Heart left ventricle (tissue), 16 donors: ENCODE measurements at regions of chr17 and their contacts with region 1.

Region 1: GRCh38 chr17:39730095-39730921 is at the start of gene MIEN1:
- DNase-seq: peak; percentile 90 to 98 (median 94)
- ATAC-seq: peak; percentile 87 to 97 (median 96)
- H3K4me3 ChIP-seq: peak within 1 kb of the TSS; percentile 56 to 99 (median 81)
- H3K27ac ChIP-seq: peak within 1 kb of the TSS; percentile 48 to 97 (median 90)
- H3K4me1 ChIP-seq: peaks cover 0 to 19% (median 8%) of the 10 kb centered on the region in 12 donors
- H3K27me3 ChIP-seq: peaks cover 0 to 2% (median 0%) of the 10 kb centered on the region in 9 donors
- CTCF ChIP-seq: peak; percentile 88 to 98 (median 92)
- POLR2A ChIP-seq: peak; percentile 6 to 87
- total RNA-seq, gene MIEN1: 34.3 to 98.1 (median 53.3) TPM

Region 2: DNA sequence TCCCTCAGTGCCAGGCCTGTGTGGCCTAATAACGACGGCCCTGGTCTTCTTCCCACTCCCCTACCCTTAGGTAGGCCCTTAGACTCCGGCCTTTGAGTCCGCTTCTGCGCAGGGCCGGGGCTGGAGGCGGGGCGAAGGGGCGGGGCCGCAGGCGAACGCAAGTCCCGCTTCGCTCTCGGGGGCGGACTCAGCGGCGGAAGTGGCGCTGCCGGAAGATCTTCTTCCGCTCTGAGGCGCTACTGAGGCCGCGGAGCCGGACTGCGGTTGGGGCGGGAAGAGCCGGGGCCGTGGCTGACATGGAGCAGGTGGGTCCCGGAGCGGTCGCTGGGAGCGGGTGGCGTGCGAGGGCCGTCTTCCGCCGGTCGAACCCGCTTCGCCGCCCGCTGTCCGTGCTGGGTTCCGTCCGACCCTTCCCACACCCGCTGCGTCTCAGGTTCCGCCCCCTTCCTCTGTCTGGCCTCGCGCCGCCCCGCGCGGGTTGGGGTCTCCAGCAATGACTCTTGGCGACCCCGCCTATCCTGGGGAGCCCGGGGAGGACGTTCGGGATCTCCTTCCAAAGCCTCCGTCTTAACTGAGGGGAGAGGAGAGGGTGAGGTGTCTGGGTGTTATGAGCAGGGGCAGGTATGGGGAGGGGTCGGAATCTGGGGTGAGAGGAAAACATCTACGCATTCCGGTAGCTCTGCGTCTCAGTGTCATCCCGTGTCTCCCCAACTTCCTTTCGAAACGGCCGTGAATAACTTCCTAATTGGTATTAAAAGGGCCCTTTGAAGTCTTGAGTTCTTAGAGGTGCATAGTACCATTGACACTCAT is 93.2 kb before region 1 on chr17 and contains the start of gene STARD3:
- intact Hi-C with region 1: loop called in 1 of 10 experiments (anchors 5 kb)
- DNase-seq: peak; percentile 94 to 97 (median 95)
- ATAC-seq: peak; percentile 90 to 97 (median 96)
- H3K4me3 ChIP-seq: peak within 1 kb of the TSS; percentile 56 to 95 (median 82)
- H3K27ac ChIP-seq: peak within 1 kb of the TSS; percentile 74 to 96 (median 92)
- H3K4me1 ChIP-seq: peaks cover 10 to 62% (median 48%) of the 10 kb centered on the region in 12 donors
- H3K27me3 ChIP-seq: no peaks in the 10 kb centered on the region
- CTCF ChIP-seq: peak in 7 of 12 donors; percentile 15 to 52 (median 32)
- POLR2A ChIP-seq: peak in 1 of 2 donors; percentile 77
- total RNA-seq, gene STARD3: 14.1 to 36.5 (median 19.3) TPM

Region 3: DNA sequence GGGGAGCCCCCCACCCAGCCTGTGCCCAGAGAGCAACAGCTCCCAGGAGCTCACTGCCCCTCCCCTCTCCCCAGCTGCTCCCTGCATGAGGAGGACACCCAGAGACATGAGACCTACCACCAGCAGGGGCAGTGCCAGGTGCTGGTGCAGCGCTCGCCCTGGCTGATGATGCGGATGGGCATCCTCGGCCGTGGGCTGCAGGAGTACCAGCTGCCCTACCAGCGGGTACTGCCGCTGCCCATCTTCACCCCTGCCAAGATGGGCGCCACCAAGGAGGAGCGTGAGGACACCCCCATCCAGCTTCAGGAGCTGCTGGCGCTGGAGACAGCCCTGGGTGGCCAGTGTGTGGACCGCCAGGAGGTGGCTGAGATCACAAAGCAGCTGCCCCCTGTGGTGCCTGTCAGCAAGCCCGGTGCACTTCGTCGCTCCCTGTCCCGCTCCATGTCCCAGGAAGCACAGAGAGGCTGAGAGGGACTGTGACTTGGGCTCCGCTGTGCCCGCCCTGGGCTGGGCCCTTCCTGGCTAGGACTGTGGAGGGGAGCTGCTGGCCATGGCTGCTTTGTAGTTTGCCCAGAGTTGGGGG is 64.6 kb before region 1 on chr17:
- intact Hi-C with region 1: no loop called
- DNase-seq: peak in 2 of 5 donors; percentile 64 to 71
- ATAC-seq: peak in 2 of 4 donors; percentile 1 to 15
- H3K4me3 ChIP-seq: peak overlapping the region; percentile 50 to 78 (median 64)
- H3K27ac ChIP-seq: peak overlapping the region; percentile 85 to 99 (median 96)
- H3K4me1 ChIP-seq: peaks cover 10 to 92% (median 56%) of the 10 kb centered on the region in 12 donors
- H3K27me3 ChIP-seq: peaks cover 0 to 34% (median 11%) of the 10 kb centered on the region in 9 donors
- CTCF ChIP-seq: peak in 3 of 12 donors; percentile 12 to 21 (median 15)
- POLR2A ChIP-seq: no peak

Region 4: DNA sequence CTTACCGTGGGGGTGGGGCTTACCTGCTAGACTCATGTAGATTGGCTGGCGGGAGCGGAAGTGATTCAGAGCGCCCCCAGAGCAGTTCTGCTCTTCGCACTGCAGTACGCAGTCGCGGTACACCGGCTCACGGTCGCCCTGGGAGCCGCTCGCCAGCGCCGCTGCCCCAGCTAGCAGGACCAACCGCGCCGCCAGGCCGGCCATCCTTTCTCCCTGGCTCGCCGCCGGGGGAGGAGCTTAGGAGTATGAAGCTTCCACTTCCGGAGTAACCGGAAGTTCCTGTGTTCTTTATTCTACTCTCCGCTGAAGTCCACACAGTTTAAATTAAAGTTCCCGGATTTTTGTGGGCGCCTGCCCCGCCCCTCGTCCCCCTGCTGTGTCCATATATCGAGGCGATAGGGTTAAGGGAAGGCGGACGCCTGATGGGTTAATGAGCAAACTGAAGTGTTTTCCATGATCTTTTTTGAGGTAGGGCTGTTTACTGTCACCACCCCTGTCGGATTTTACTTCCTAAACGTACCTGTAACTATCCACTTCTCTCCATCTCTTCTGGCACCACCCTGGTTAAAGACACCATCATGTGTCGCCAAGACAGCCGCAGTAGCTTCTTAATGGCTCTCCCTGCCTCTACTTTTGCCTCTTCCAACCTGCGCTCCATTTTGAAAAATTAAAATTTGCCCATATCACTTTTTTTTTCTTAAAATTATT is 42.3 kb before region 1 on chr17 and contains the start of gene PGAP3:
- intact Hi-C with region 1: loop called in 3 of 10 experiments (anchors 5 kb)
- DNase-seq: peak; percentile 89 to 92 (median 90)
- ATAC-seq: peak; percentile 86 to 97 (median 96)
- H3K4me3 ChIP-seq: peak within 1 kb of the TSS; percentile 31 to 95 (median 75)
- H3K27ac ChIP-seq: peak within 1 kb of the TSS; percentile 81 to 99 (median 90)
- H3K4me1 ChIP-seq: peaks cover 0 to 18% (median 12%) of the 10 kb centered on the region in 12 donors
- H3K27me3 ChIP-seq: no peaks in the 10 kb centered on the region
- CTCF ChIP-seq: peak in 1 of 12 donors; percentile 20
- POLR2A ChIP-seq: peak in 1 of 2 donors; percentile 67
- total RNA-seq, gene PGAP3: 8.0 to 18.8 (median 13.1) TPM

Region 5: GRCh38 chr17:39699818-39700147 is 30.5 kb before region 1 on chr17 and contains the start of gene ERBB2:
- intact Hi-C with region 1: loop called in 1 of 10 experiments (anchors 5 kb)
- DNase-seq: peak; percentile 74 to 83 (median 78)
- ATAC-seq: peak; percentile 66 to 87 (median 86)
- H3K4me3 ChIP-seq: peak within 1 kb of the TSS; percentile 71 to 99 (median 90)
- H3K27ac ChIP-seq: peak within 1 kb of the TSS; percentile 54 to 94 (median 90)
- H3K4me1 ChIP-seq: peaks cover 0 to 48% (median 16%) of the 10 kb centered on the region in 12 donors
- H3K27me3 ChIP-seq: peaks cover 0 to 13% (median 0%) of the 10 kb centered on the region in 9 donors
- CTCF ChIP-seq: no peak
- POLR2A ChIP-seq: peak in 1 of 2 donors; percentile 58
- total RNA-seq, gene ERBB2: 51.4 to 95.1 (median 79.3) TPM